Activated CD4-positive, alpha-beta memory T cell treated with anti-CD3 and anti-CD28 coated beads for 36 hours (primary cell): ENCODE measurements at regions of chr6 and their contacts with region 1.

Region 1: DNA sequence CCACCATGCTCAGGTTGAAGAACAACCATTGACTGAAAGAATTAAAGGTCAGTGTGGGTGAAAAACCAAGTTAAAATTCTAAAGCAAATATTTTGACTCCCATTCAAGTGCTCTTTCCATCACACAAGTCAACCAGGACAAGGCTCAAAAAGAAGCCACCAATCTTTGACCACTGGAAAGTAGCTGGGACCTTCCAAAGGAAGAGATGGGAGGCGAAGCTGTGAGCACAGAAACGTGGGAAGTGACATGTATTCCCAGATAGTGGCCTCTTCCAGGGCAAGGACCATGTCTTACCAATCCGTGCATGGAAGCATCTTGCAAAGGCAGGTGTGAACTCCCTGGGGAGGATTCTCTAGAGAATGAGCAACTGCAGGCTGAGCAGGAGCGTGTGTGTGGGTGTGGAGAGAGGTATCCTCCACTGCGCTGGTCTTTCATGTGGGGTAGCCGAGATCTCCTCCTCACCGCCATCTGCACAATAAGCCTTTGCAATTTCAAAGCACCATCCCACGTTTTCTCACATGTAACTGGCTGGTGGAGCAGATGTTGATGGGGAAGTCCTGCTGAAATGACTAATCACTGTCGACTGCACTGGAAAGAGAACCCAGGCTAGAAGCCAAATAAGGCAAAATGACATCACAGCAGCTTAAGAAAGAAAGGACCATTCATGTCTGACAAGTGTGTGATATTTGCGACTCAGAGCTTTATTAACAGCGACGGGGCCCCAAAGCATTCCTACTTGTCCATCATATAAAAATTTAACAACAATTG is 189.4 kb upstream of the RREB1 start:
- DNase-seq: peak; percentile 89
- H3K4me3 Mint-ChIP-seq: no peak overlapping the region
- H3K27ac Mint-ChIP-seq: peak overlapping the region; percentile 18
- H3K4me1 Mint-ChIP-seq: peaks cover 17% of the 10 kb centered on the region
- H3K27me3 Mint-ChIP-seq: peaks cover 26% of the 10 kb centered on the region

Region 2: GRCh38 chr6:6686748-6687601 is 231.4 kb before region 1 on chr6:
- CTCF ChIA-PET with region 1: interaction called, 3 read pairs
- POLR2A ChIA-PET with region 1: no interaction called
- intact Hi-C with region 1: loop called (anchors 1 kb)
- DNase-seq: peak; percentile 32
- H3K4me3 Mint-ChIP-seq: no peak overlapping the region
- H3K27ac Mint-ChIP-seq: no peak overlapping the region
- H3K4me1 Mint-ChIP-seq: peaks cover 33% of the 10 kb centered on the region
- H3K27me3 Mint-ChIP-seq: peaks cover 4% of the 10 kb centered on the region

Region 3: GRCh38 chr6:6811151-6812002 is 107.0 kb before region 1 on chr6:
- CTCF ChIA-PET with region 1: interaction called, 3 read pairs
- POLR2A ChIA-PET with region 1: no interaction called
- intact Hi-C with region 1: loop called (anchors 5 kb)
- DNase-seq: peak; percentile 54
- H3K4me3 Mint-ChIP-seq: peak overlapping the region; percentile 51
- H3K27ac Mint-ChIP-seq: no peak overlapping the region
- H3K4me1 Mint-ChIP-seq: peaks cover 18% of the 10 kb centered on the region
- H3K27me3 Mint-ChIP-seq: peaks cover 5% of the 10 kb centered on the region

Region 4: GRCh38 chr6:7073821-7074525 is 155.6 kb after region 1 on chr6:
- CTCF ChIA-PET with region 1: no interaction called
- POLR2A ChIA-PET with region 1: no interaction called
- intact Hi-C with region 1: loop called (anchors 1 kb)
- DNase-seq: peak; percentile 87
- H3K4me3 Mint-ChIP-seq: peak overlapping the region; percentile 8
- H3K27ac Mint-ChIP-seq: no peak overlapping the region
- H3K4me1 Mint-ChIP-seq: peaks cover 14% of the 10 kb centered on the region
- H3K27me3 Mint-ChIP-seq: peaks cover 19% of the 10 kb centered on the region

Region 5: GRCh38 chr6:7107578-7108195 is 189.3 kb after region 1 on chr6 and contains the start of gene RREB1:
- CTCF ChIA-PET with region 1: no interaction called
- POLR2A ChIA-PET with region 1: no interaction called
- intact Hi-C with region 1: loop called (anchors 1 kb)
- DNase-seq: peak; percentile 72
- H3K4me3 Mint-ChIP-seq: peak within 1 kb of the TSS; percentile 88
- H3K27ac Mint-ChIP-seq: peak within 1 kb of the TSS; percentile 93
- H3K4me1 Mint-ChIP-seq: peaks cover 36% of the 10 kb centered on the region
- H3K27me3 Mint-ChIP-seq: no peaks in the 10 kb centered on the region
- total RNA-seq, gene RREB1: 13.0 to 13.5 TPM

Region 6: GRCh38 chr6:7119272-7119801 is 200.9 kb after region 1 on chr6:
- CTCF ChIA-PET with region 1: no interaction called
- POLR2A ChIA-PET with region 1: no interaction called
- intact Hi-C with region 1: no loop called
- DNase-seq: no peak
- H3K4me3 Mint-ChIP-seq: no peak overlapping the region
- H3K27ac Mint-ChIP-seq: no peak overlapping the region
- H3K4me1 Mint-ChIP-seq: peaks cover 45% of the 10 kb centered on the region
- H3K27me3 Mint-ChIP-seq: no peaks in the 10 kb centered on the region